ENCODE measurements at regions of chr7 and their contacts with region 1.

Region 1: DNA sequence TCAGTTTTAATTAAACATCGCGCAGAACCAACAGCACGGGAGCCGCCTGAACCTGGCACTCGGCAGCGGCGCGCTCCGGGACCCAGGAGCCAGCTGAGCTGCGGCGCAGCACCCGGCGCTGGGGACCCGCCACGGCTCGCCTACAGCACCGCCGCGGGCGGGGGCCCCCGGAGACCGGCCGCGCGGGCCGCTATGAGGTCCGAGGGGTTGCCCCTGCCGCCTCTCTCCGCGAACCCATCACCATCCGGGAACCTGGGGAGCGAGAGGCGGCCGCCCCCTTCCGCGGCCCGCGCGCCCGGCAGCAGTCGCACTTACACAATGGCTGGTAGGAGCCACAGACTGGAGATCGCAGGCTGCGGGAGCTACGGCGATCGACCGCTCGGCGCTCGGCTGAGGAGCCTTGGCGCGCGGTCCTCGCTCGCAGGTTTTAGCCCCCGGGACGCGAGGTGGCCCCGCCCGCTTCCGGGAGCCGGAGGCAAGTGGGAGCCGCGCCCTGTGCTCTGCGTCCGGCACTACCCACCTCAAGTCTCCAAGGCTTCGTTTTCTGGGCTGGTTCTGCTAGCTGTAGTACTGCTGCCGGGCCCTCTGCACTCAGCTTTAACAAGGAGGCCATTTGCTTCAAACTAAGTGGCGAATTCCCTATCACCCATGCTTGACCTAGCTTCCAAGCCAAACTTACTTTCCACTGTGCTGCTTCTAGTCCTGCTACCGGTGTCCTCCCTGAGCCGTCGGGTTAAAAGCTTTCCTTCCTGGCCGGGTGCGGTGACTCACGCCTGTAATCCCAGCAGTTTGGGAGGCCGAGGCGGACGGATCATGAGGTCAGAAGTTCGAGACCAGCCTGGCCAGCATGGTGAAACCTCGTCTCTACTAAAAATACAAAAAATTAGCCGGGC is at the start of gene TPK1:
- DNase-seq: peak; percentile 92
- ATAC-seq: peak; percentile 88
- H3K4me3 Mint-ChIP-seq: peak within 1 kb of the TSS; percentile 95
- H3K27ac Mint-ChIP-seq: peak within 1 kb of the TSS; percentile 99
- H3K4me1 Mint-ChIP-seq: peaks cover 30% of the 10 kb centered on the region
- H3K27me3 Mint-ChIP-seq: no peaks in the 10 kb centered on the region
- CTCF ChIP-seq: no peak
- total RNA-seq, gene TPK1: 15.5 to 15.8 TPM

Region 2: DNA sequence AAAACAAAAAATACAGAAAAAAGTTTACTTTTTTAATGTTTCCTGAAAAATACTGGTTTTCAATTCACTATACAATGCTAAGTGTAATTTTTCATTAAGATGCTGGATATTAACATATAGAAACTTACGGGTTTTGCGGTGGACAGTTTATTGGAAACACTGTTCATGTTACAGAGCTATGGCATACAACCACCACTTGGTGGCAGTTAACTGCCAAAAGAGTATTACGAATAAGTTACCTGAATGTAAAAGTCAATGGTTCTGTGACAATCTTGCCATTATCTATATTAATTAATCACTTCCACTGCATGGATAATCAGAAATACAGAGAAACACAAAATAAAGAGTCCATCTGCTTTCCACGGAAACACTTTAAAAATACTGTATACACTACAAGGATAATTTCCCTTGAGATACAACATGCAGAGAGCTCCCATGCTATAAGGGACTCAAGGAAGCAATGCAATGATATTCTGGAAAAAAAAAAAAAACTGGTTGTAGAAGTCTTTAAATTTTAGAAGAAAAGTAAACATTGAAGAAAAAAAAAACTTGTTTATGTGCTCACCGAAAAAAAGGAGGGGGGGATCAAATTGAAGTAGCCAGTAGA is 97.1 kb before region 1 on chr7:
- CTCF ChIA-PET with region 1: interaction called, 8 read pairs
- POLR2A ChIA-PET with region 1: interaction called, 4 read pairs
- intact Hi-C with region 1: loop called (anchors 10 kb)
- DNase-seq: peak; percentile 31
- ATAC-seq: peak; percentile 64
- H3K4me3 Mint-ChIP-seq: no peak overlapping the region
- H3K27ac Mint-ChIP-seq: no peak overlapping the region
- H3K4me1 Mint-ChIP-seq: no peaks in the 10 kb centered on the region
- H3K27me3 Mint-ChIP-seq: no peaks in the 10 kb centered on the region
- CTCF ChIP-seq: peak; percentile 77

Region 3: GRCh38 chr7:144812379-144813283 is 23.3 kb before region 1 on chr7:
- CTCF ChIA-PET with region 1: interaction called, 9 read pairs
- POLR2A ChIA-PET with region 1: interaction called, 42 read pairs
- intact Hi-C with region 1: no loop called
- DNase-seq: peak; percentile 62
- ATAC-seq: peak; percentile 91
- H3K4me3 Mint-ChIP-seq: peak overlapping the region; percentile 64
- H3K27ac Mint-ChIP-seq: peak overlapping the region; percentile 92
- H3K4me1 Mint-ChIP-seq: peaks cover 59% of the 10 kb centered on the region
- H3K27me3 Mint-ChIP-seq: no peaks in the 10 kb centered on the region
- CTCF ChIP-seq: no peak

Region 4: DNA sequence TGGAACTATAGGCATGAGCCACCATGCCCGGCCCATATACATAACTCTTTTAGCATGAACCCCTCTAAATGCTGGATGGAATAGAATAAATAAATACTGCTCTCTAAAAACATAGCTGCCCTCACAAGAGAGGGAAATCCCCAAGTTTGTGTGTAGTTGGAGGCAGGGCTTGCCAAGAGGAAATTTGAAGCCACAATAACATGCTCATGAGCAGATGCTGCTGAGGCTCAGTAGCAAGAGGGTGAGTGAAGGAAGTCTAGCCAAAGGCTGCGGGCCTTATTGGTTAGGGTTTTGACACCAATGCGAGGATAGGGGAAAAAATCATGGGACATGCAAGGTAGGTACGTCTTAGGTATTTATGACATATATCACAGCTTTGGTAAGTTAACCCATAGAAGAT is 17.4 kb before region 1 on chr7:
- CTCF ChIA-PET with region 1: interaction called, 20 read pairs
- POLR2A ChIA-PET with region 1: interaction called, 71 read pairs
- intact Hi-C with region 1: no loop called
- DNase-seq: peak; percentile 67
- ATAC-seq: peak; percentile 69
- H3K4me3 Mint-ChIP-seq: no peak overlapping the region
- H3K27ac Mint-ChIP-seq: peak overlapping the region; percentile 86
- H3K4me1 Mint-ChIP-seq: peaks cover 73% of the 10 kb centered on the region
- H3K27me3 Mint-ChIP-seq: no peaks in the 10 kb centered on the region
- CTCF ChIP-seq: no peak